ENCODE measurements at regions of chr22 and their contacts with region 1.

Region 1: DNA sequence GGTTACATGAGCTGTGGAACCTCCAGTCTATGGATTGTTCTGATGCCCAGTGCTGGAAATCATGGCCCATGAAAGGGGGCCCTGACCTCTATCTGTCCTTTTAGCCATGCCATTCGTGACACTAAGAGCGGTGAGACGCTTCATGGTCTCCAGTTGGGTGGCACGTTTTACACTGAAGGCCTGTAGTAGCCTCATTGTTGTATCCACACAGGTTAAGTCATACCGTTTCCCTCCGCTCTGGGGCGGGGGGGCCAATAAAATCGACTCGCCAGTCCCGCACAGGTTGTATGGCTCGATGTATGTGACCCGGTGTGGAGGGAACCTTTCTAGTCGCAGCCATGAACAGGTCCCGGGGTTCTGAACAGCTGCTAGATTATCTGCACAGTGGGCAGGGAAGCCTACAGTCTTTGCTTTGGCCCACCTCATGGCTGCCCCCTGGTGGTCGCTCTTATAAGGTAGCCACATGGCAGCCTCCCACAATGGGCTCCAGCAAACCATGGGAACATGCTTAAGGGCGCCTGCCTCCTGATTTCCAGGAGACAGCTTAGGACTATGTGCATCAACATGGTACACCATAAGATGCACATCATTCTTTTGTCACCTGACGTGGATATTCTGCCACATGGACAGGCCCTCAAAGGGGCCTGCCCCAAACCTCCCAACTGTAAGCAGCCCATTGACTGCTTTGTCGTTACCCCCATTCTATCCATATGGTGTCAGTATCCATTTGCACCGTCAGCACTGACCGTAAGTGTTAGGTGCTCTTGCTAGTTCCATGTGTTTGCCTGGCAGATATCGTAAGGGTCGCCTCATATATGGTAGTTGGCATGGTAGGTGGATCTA is 19.7 kb upstream of the APOL3 start:
- DNase-seq: peak; percentile 68
- H3K4me3 Mint-ChIP-seq: no peak overlapping the region
- H3K27ac Mint-ChIP-seq: no peak overlapping the region
- H3K4me1 Mint-ChIP-seq: peaks cover 3% of the 10 kb centered on the region
- H3K27me3 Mint-ChIP-seq: peaks cover 5% of the 10 kb centered on the region

Region 2: GRCh38 chr22:36144886-36145541 is 35.2 kb before region 1 on chr22:
- intact Hi-C with region 1: loop called (anchors 1 kb)
- DNase-seq: no peak
- H3K4me3 Mint-ChIP-seq: no peak overlapping the region
- H3K27ac Mint-ChIP-seq: no peak overlapping the region
- H3K4me1 Mint-ChIP-seq: peaks cover 3% of the 10 kb centered on the region
- H3K27me3 Mint-ChIP-seq: no peaks in the 10 kb centered on the region